Natural killer cell (primary cell): ENCODE measurements at regions of chr6 and their contacts with region 1.

Region 1: DNA sequence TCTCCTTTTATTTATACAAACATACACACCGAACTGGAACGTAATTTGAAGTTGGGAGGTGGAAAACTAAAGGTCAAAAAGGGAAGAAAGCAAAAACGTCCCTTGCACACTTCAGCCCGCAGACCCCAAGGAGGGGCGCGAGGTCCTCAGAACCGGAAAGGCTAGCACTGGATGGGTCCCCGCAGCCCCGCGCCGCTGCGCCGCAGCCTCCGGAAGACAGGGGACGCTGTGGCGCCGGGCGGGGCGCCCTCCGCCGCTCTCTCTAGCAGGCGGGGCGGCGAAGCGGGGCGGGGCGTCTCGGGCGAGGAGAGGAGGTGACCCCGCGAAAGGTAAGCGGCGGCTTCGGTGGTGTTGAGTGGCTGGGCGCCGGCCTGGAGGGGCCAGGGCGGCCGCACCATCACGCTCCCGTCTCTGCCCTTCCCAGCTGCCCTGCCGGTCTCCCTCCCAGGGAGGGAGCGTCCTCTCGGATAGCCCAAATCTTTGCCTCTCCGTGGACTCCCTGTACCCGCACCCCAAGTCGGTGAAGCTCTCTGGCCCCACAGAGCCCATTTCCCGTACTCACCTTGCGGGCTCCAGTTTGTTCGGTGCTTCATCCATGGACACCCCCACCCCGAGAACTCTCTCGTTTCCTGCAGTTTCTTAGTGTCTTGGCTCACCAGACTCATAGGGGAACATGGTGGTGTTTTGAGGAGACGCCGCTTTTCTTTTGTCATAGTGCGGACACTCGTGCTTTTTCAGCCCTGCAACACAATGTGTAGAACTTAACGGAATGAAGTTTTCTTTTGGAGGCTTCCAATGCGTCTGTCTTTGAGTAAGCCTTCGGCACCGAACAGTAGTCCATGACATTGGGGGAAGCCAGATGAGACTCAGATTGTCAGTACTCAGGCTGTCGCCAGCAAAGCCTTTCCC is at the start of gene SMIM8:
- DNase-seq: peak; percentile 83 to 88
- ATAC-seq: peak; percentile 99 to 100 (median 100)
- H3K4me3 ChIP-seq: peak within 1 kb of the TSS; percentile 89
- H3K4me3 Mint-ChIP-seq: peak within 1 kb of the TSS; percentile 99
- H3K27ac ChIP-seq: peak within 1 kb of the TSS; percentile 49
- H3K27ac Mint-ChIP-seq: peak within 1 kb of the TSS; percentile 85 to 92
- H3K4me1 ChIP-seq: peaks cover 6% of the 10 kb centered on the region
- H3K4me1 Mint-ChIP-seq: peaks cover 13 to 23% of the 10 kb centered on the region in 2 donors
- H3K27me3 ChIP-seq: no peaks in the 10 kb centered on the region
- H3K27me3 Mint-ChIP-seq: peaks cover 8 to 9% of the 10 kb centered on the region in 2 donors
- CTCF ChIP-seq: peak; percentile 100
- total RNA-seq, gene SMIM8: 8.0 to 11.1 (median 9.5) TPM

Region 2: DNA sequence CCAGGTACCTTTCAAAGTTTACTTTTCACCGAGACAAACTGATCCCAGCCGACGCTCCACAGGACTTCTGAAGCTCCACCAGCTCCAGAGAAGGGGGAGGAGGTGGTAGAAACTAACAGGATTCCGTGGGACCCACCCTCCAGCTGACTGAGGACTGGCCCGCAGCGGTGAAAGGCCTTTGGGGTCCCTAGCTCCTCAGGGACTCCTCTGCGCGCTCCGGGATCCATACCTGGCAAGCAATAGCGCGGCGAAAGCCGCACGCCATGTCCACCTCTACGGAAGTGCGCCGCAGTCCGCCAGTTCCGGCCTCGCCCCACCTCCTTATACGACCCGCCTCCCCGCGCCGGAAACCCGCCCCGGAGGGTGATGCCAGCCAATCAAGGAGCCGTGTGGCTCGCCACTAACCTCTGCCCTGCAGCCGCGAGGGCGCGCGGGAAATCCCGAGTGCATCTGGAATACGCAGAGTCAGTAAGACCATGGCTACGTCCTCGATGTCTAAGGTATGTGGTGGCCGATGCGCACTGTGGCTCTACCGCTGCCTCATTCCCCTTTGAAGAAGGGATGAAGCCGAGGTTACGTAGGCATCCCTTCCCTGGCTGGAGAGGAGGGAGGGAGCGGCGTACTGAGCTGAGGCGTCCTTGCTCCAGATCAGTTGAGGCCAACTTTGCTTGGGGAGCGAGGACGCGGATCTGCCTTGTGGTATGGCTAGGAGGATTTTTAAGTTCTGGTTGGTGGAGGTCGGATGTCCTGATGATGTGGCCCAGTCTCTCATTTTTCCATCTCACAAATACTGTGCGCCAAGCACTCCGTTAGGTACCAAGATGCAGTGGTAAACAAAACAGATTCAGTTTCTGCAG is 267.4 kb after region 1 on chr6 and contains the starts of genes ORC3 and RARS2:
- intact Hi-C with region 1: loop called (anchors 1 kb)
- DNase-seq: peak; percentile 93 to 96
- ATAC-seq: peak; percentile 98 to 100 (median 99)
- H3K4me3 ChIP-seq: peak within 1 kb of the TSS; percentile 80
- H3K4me3 Mint-ChIP-seq: peak within 1 kb of the TSS; percentile 88
- H3K27ac ChIP-seq: peak within 1 kb of the TSS; percentile 73
- H3K27ac Mint-ChIP-seq: peak within 1 kb of the TSS; percentile 85 to 90
- H3K4me1 ChIP-seq: peaks cover 16% of the 10 kb centered on the region
- H3K4me1 Mint-ChIP-seq: peaks cover 50 to 51% of the 10 kb centered on the region in 2 donors
- H3K27me3 ChIP-seq: no peaks in the 10 kb centered on the region
- H3K27me3 Mint-ChIP-seq: no peaks in the 10 kb centered on the region
- CTCF ChIP-seq: no peak
- total RNA-seq, gene ORC3: 13.1 to 13.4 (median 13.3) TPM
- total RNA-seq, gene RARS2: 21.8 to 26.5 (median 24.2) TPM